CD8-positive, alpha-beta T cell (primary cell): ENCODE measurements at regions of chr6 and their contacts with region 1.

Region 1: GRCh38 chr6:169789982-169790927 is 38.8 kb downstream of the ERMARD start:
- DNase-seq: peak; percentile 57 to 84 (median 73)
- ATAC-seq: peak; percentile 98
- H3K4me3 ChIP-seq: peak overlapping the region; percentile 46 to 58
- H3K4me3 Mint-ChIP-seq: peak overlapping the region; percentile 86
- H3K27ac ChIP-seq: no peak overlapping the region
- H3K27ac Mint-ChIP-seq: no peak overlapping the region
- H3K4me1 ChIP-seq: peaks cover 8% of the 10 kb centered on the region
- H3K4me1 Mint-ChIP-seq: peaks cover 16% of the 10 kb centered on the region
- H3K27me3 ChIP-seq: peaks cover 0 to 6% of the 10 kb centered on the region in 2 experiments
- H3K27me3 Mint-ChIP-seq: peaks cover 38% of the 10 kb centered on the region
- CTCF ChIP-seq: peak; percentile 93

Region 2: GRCh38 chr6:168895102-168895812 is 895.0 kb before region 1 on chr6:
- CTCF ChIA-PET with region 1: no interaction called
- POLR2A ChIA-PET with region 1: no interaction called
- intact Hi-C with region 1: loop called (anchors 1 to 5 kb)
- DNase-seq: peak; percentile 52 to 91 (median 78)
- ATAC-seq: peak; percentile 98
- H3K4me3 ChIP-seq: peak overlapping the region; percentile 8 to 16
- H3K4me3 Mint-ChIP-seq: peak overlapping the region; percentile 57
- H3K27ac ChIP-seq: no peak overlapping the region
- H3K27ac Mint-ChIP-seq: peak overlapping the region; percentile 69
- H3K4me1 ChIP-seq: peaks cover 7% of the 10 kb centered on the region
- H3K4me1 Mint-ChIP-seq: peaks cover 17% of the 10 kb centered on the region
- H3K27me3 ChIP-seq: no peaks in the 10 kb centered on the region
- H3K27me3 Mint-ChIP-seq: peaks cover 4% of the 10 kb centered on the region
- CTCF ChIP-seq: peak; percentile 81

Region 3: DNA sequence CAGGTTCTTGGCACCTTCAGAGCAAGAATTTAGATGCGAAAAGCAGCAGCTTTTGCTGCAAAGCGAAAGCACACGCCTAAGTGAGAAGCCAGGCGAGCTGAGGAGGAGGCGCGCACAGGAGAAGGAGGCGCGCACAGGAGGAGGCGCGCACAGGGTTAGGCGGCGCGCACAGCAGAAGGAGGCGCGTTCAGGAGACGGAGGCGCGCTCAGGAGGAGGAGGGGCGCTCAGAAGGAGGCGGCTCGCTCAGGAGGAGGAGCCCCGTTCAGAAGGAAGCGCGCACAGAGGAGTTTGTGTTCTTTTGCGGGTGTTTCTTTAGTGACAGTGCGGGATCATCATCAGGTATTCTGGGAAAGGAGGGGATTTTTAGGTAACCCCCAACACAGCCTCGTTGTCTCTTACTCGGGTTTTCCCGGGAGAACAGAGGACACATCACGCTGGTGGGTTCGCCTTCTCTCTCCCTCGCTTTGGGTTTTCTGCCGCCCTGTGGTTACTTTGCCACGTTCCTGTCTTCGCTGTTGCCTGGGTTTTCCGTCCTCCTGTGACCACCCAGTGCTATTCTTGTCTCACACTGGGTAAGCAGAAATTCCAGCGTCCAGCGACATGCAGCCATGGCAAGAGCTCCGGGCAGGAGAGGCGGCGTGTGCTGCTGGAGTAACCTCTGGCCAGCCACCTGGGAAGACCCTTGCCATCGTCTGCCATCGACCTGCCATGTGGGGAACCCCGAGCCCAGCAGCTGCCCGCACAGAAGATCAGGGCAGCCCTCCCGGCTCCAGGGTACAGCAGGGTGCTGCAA is 135.5 kb before region 1 on chr6:
- CTCF ChIA-PET with region 1: no interaction called
- POLR2A ChIA-PET with region 1: no interaction called
- intact Hi-C with region 1: no loop called
- DNase-seq: peak; percentile 54 to 89 (median 69)
- ATAC-seq: peak; percentile 97
- H3K4me3 ChIP-seq: peak overlapping the region; percentile 52 to 63
- H3K4me3 Mint-ChIP-seq: peak overlapping the region; percentile 92
- H3K27ac ChIP-seq: peak overlapping the region; percentile 49 to 61
- H3K27ac Mint-ChIP-seq: peak overlapping the region; percentile 90
- H3K4me1 ChIP-seq: peaks cover 6% of the 10 kb centered on the region
- H3K4me1 Mint-ChIP-seq: peaks cover 15% of the 10 kb centered on the region
- H3K27me3 ChIP-seq: no peaks in the 10 kb centered on the region
- H3K27me3 Mint-ChIP-seq: no peaks in the 10 kb centered on the region
- CTCF ChIP-seq: no peak

Region 4: DNA sequence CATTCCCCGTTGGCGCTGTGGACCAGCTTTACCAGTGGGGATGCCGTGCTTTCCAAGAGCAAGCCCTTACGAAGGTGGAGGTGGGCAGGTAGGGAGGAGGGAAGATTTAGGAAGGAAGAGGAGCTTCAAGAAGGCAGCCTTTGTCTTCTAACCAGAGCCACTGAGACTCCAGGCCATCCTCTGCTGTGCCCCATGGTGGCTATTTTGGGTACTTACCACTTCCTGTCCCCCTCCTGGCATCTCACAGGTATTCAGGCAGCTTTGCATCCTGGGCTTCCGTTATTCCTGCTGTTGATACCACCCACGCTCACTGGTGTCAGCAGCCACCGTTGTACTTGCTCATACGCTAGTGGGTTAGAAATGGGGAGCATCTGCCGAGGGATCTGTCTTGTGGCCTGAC is 15.9 kb before region 1 on chr6:
- CTCF ChIA-PET with region 1: interaction called, 17 read pairs
- POLR2A ChIA-PET with region 1: no interaction called
- intact Hi-C with region 1: no loop called
- DNase-seq: peak in 1 of 9 experiments; percentile 20
- ATAC-seq: no peak
- H3K4me3 ChIP-seq: no peak overlapping the region
- H3K4me3 Mint-ChIP-seq: no peak overlapping the region
- H3K27ac ChIP-seq: no peak overlapping the region
- H3K27ac Mint-ChIP-seq: no peak overlapping the region
- H3K4me1 ChIP-seq: no peaks in the 10 kb centered on the region
- H3K4me1 Mint-ChIP-seq: no peaks in the 10 kb centered on the region
- H3K27me3 ChIP-seq: no peaks in the 10 kb centered on the region
- H3K27me3 Mint-ChIP-seq: no peaks in the 10 kb centered on the region
- CTCF ChIP-seq: no peak

Region 5: DNA sequence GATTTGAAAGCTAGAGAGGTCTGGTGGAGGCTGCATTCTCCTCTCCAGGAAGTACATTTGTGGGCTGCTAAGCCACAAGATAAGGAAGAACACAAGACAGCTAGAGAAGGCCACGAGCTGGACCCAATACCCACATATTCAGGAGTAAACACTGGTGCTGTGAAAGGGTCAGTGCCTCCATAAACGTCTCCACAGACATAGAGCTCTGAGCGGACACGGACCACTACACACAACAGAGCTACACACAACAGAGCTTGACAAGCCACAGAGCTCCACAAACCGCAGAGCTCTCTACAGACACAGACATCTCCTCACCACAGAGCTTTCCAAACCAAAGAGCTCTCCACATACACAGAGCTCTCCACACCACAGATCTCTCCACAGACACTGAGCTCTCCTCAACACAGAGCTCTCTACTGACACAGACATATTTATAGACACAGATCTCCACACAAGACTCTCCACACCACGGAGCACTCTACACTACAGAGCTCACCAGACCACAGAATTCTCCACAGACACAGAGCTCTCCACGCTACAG is 13.1 kb after region 1 on chr6:
- CTCF ChIA-PET with region 1: interaction called, 52 read pairs
- POLR2A ChIA-PET with region 1: no interaction called
- intact Hi-C with region 1: no loop called
- DNase-seq: peak in 2 of 9 experiments; percentile 37 to 53
- ATAC-seq: peak; percentile 8
- H3K4me3 ChIP-seq: no peak overlapping the region
- H3K4me3 Mint-ChIP-seq: peak overlapping the region; percentile 2
- H3K27ac ChIP-seq: no peak overlapping the region
- H3K27ac Mint-ChIP-seq: no peak overlapping the region
- H3K4me1 ChIP-seq: peaks cover 54% of the 10 kb centered on the region
- H3K4me1 Mint-ChIP-seq: peaks cover 51% of the 10 kb centered on the region
- H3K27me3 ChIP-seq: peaks cover 0 to 4% of the 10 kb centered on the region in 2 experiments
- H3K27me3 Mint-ChIP-seq: peaks cover 38% of the 10 kb centered on the region
- CTCF ChIP-seq: no peak

Region 6: DNA sequence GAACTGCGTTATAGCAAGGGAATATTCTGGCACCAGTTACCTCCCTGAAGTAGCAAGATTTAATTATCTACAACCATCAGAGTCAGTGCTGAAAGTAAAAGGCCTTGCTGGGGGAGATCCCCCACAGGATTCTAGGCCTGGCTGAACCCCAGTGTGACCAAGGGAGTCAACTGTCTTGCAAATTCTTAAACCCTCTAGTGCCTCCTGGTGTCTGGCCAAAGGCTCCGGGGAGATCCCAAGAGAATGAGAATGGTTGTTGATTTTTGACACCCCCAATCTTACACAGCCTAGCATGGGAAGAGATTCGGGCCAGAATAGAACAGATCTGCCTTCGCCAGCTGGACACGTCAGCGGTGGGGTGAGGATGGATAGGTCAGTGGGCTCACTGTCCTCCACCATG is 140.5 kb after region 1 on chr6:
- CTCF ChIA-PET with region 1: interaction called, 5 read pairs
- POLR2A ChIA-PET with region 1: no interaction called
- intact Hi-C with region 1: loop called (anchors 2 kb)
- DNase-seq: peak in 3 of 9 experiments; percentile 31 to 45 (median 44)
- ATAC-seq: no peak
- H3K4me3 ChIP-seq: no peak overlapping the region
- H3K4me3 Mint-ChIP-seq: no peak overlapping the region
- H3K27ac ChIP-seq: no peak overlapping the region
- H3K27ac Mint-ChIP-seq: no peak overlapping the region
- H3K4me1 ChIP-seq: no peaks in the 10 kb centered on the region
- H3K4me1 Mint-ChIP-seq: no peaks in the 10 kb centered on the region
- H3K27me3 ChIP-seq: no peaks in the 10 kb centered on the region
- H3K27me3 Mint-ChIP-seq: peaks cover 14% of the 10 kb centered on the region
- CTCF ChIP-seq: peak; percentile 22

Region 7: GRCh38 chr6:169950558-169950957 is 160.3 kb after region 1 on chr6:
- CTCF ChIA-PET with region 1: interaction called, 6 read pairs
- POLR2A ChIA-PET with region 1: interaction called, 3 read pairs
- intact Hi-C with region 1: loop called in 1 of 2 experiments (anchors 5 kb)
- DNase-seq: peak in 7 of 9 experiments; percentile 16 to 69 (median 51)
- ATAC-seq: peak; percentile 40
- H3K4me3 ChIP-seq: no peak overlapping the region
- H3K4me3 Mint-ChIP-seq: no peak overlapping the region
- H3K27ac ChIP-seq: no peak overlapping the region
- H3K27ac Mint-ChIP-seq: no peak overlapping the region
- H3K4me1 ChIP-seq: no peaks in the 10 kb centered on the region
- H3K4me1 Mint-ChIP-seq: no peaks in the 10 kb centered on the region
- H3K27me3 ChIP-seq: no peaks in the 10 kb centered on the region
- H3K27me3 Mint-ChIP-seq: no peaks in the 10 kb centered on the region
- CTCF ChIP-seq: peak; percentile 53

Region 8: GRCh38 chr6:170516783-170517616 is 726.7 kb after region 1 on chr6:
- CTCF ChIA-PET with region 1: interaction called, 31 read pairs
- POLR2A ChIA-PET with region 1: no interaction called
- intact Hi-C with region 1: loop called (anchors 1 kb)
- DNase-seq: peak in 8 of 9 experiments; percentile 11 to 71 (median 35)
- ATAC-seq: peak; percentile 89
- H3K4me3 ChIP-seq: no peak overlapping the region
- H3K4me3 Mint-ChIP-seq: peak overlapping the region; percentile 58
- H3K27ac ChIP-seq: no peak overlapping the region
- H3K27ac Mint-ChIP-seq: no peak overlapping the region
- H3K4me1 ChIP-seq: no peaks in the 10 kb centered on the region
- H3K4me1 Mint-ChIP-seq: peaks cover 2% of the 10 kb centered on the region
- H3K27me3 ChIP-seq: no peaks in the 10 kb centered on the region
- H3K27me3 Mint-ChIP-seq: peaks cover 31% of the 10 kb centered on the region
- CTCF ChIP-seq: peak; percentile 87